Heart right ventricle (tissue), 16 donors: ENCODE measurements at regions of chr3 and their contacts with region 1.

Region 1: GRCh38 chr3:38579551-38580449 is 69.7 kb downstream of the SCN5A start:
- DNase-seq: peak; percentile 53 to 59
- ATAC-seq: peak; percentile 49 to 84 (median 78)
- H3K4me3 ChIP-seq: no peak overlapping the region
- H3K27ac ChIP-seq: peak overlapping the region; percentile 50 to 98 (median 84)
- H3K4me1 ChIP-seq: peaks cover 16 to 86% (median 61%) of the 10 kb centered on the region in 9 donors
- H3K27me3 ChIP-seq: no peaks in the 10 kb centered on the region
- CTCF ChIP-seq: peak in 1 of 9 donors; percentile 10

Region 2: GRCh38 chr3:38521391-38521987 is 58.3 kb before region 1 on chr3:
- intact Hi-C with region 1: loop called in 2 of 10 experiments (anchors 2 to 5 kb)
- DNase-seq: peak in 1 of 2 donors; percentile 70
- ATAC-seq: peak; percentile 45 to 78 (median 70)
- H3K4me3 ChIP-seq: no peak overlapping the region
- H3K27ac ChIP-seq: peak overlapping the region in 7 of 10 donors; percentile 12 to 75 (median 63)
- H3K4me1 ChIP-seq: peaks cover 0 to 37% (median 16%) of the 10 kb centered on the region in 9 donors
- H3K27me3 ChIP-seq: no peaks in the 10 kb centered on the region
- CTCF ChIP-seq: peak; percentile 80 to 95 (median 92)

Region 3: DNA sequence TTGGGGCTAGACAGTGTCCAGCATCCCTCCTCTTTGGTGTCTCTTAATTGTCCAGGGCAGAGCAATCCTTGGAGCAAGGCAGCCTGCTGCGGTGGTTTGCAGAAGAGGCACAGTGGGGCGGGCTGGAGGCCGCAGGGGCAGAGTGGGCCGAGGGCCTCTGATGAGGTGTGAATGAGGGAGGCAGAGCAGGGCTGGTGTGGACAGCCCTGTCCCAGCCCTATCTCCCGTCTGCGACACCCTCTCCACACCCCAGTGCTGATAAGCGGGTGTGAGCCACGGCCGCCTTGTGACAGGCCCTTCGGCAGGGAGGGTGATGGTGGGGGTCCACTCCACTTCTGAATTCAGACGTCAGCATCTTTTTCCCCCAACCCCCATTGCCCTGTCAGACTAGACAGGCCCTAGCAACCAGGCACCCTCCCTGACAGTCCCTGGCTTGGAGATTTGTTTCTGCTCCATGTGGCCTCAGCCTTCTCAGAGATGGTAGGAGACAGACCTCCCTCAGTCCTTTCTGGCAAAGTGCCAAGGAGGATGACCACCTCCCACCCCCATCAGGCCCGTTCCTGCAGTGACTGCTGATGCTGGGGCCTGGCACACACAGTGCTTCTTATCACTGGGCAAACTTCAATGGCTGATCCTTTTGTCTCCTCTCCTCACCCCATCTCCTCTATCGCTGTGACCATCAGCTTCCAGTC is 46.4 kb before region 1 on chr3:
- intact Hi-C with region 1: loop called in 1 of 10 experiments (anchors 5 kb)
- DNase-seq: peak; percentile 80 to 85
- ATAC-seq: peak; percentile 89 to 98 (median 94)
- H3K4me3 ChIP-seq: no peak overlapping the region
- H3K27ac ChIP-seq: peak overlapping the region in 9 of 10 donors; percentile 47 to 98 (median 73)
- H3K4me1 ChIP-seq: peaks cover 0 to 58% (median 38%) of the 10 kb centered on the region in 9 donors
- H3K27me3 ChIP-seq: no peaks in the 10 kb centered on the region
- CTCF ChIP-seq: no peak

Region 4: GRCh38 chr3:38542401-38543298 is 37.1 kb before region 1 on chr3:
- intact Hi-C with region 1: loop called in 4 of 10 experiments (anchors 2 to 5 kb)
- DNase-seq: no peak
- ATAC-seq: peak in 6 of 8 donors; percentile 7 to 54 (median 29)
- H3K4me3 ChIP-seq: no peak overlapping the region
- H3K27ac ChIP-seq: peak overlapping the region; percentile 26 to 98 (median 80)
- H3K4me1 ChIP-seq: peaks cover 20 to 87% (median 52%) of the 10 kb centered on the region in 9 donors
- H3K27me3 ChIP-seq: no peaks in the 10 kb centered on the region
- CTCF ChIP-seq: no peak